HepG2 (cell line): ENCODE measurements at regions of chr1 and their contacts with region 1.

Region 1: GRCh38 chr1:105793536-105794146 is 1262.8 kb upstream of the PRMT6 start:
- DNase-seq: peak; percentile 39
- ATAC-seq: peak; percentile 73
- H3K4me3 ChIP-seq: no peak overlapping the region
- H3K27ac ChIP-seq: no peak overlapping the region
- H3K4me1 ChIP-seq: no peaks in the 10 kb centered on the region
- H3K27me3 ChIP-seq: no peaks in the 10 kb centered on the region
- CTCF ChIP-seq: peak; percentile 80
- EP300 ChIP-seq: no peak
- POLR2A ChIP-seq: no peak
- RAD21 ChIP-seq: peak; percentile 69

Region 2: DNA sequence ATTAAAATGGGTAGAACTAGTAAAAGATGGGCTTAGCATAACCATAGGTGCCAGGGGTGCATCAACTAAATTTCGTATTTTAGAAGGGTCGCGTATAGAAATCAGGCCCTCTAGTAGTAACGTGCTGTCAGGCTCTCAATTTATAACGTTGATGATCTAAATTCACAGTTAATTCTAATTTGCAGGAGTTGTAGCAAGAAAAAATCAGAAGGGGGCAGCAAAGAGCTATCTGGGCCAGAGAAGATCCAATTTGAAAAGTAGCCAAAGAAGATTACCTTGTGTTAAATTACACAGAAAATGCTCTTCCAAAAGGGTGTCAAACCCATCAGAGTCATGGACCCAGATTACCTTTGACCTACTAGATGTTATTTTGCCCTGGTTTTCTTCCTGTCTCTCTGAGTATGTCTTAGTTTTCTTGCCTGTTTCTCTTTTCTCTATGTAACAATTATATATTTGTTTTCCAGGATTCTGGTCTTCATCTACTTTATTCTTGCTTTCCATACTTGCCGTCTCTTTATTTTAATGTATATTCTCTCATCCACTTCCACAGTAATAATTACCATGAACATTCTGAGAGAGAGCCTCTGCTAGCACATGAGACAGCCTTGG is 1013.1 kb before region 1 on chr1:
- CTCF ChIA-PET with region 1: interaction called, 19 read pairs
- POLR2A ChIA-PET with region 1: no interaction called
- in situ Hi-C with region 1: loop called (anchors 5 kb)
- intact Hi-C with region 1: loop called (anchors 5 kb)
- DNase-seq: peak; percentile 19
- ATAC-seq: no peak
- H3K4me3 ChIP-seq: no peak overlapping the region
- H3K27ac ChIP-seq: no peak overlapping the region
- H3K4me1 ChIP-seq: no peaks in the 10 kb centered on the region
- H3K27me3 ChIP-seq: no peaks in the 10 kb centered on the region
- CTCF ChIP-seq: peak; percentile 73
- EP300 ChIP-seq: no peak
- POLR2A ChIP-seq: no peak
- RAD21 ChIP-seq: peak; percentile 42

Region 3: GRCh38 chr1:105398909-105399308 is 394.7 kb before region 1 on chr1:
- CTCF ChIA-PET with region 1: no interaction called
- POLR2A ChIA-PET with region 1: no interaction called
- in situ Hi-C with region 1: no loop called
- intact Hi-C with region 1: loop called (anchors 10 kb)
- DNase-seq: no peak
- ATAC-seq: no peak
- H3K4me3 ChIP-seq: no peak overlapping the region
- H3K27ac ChIP-seq: no peak overlapping the region
- H3K4me1 ChIP-seq: no peaks in the 10 kb centered on the region
- H3K27me3 ChIP-seq: no peaks in the 10 kb centered on the region
- CTCF ChIP-seq: no peak
- EP300 ChIP-seq: no peak
- POLR2A ChIP-seq: no peak
- RAD21 ChIP-seq: no peak

Region 4: GRCh38 chr1:105462308-105462707 is 331.3 kb before region 1 on chr1:
- CTCF ChIA-PET with region 1: no interaction called
- POLR2A ChIA-PET with region 1: no interaction called
- in situ Hi-C with region 1: no loop called
- intact Hi-C with region 1: loop called (anchors 5 kb)
- DNase-seq: no peak
- ATAC-seq: no peak
- H3K4me3 ChIP-seq: no peak overlapping the region
- H3K27ac ChIP-seq: no peak overlapping the region
- H3K4me1 ChIP-seq: no peaks in the 10 kb centered on the region
- H3K27me3 ChIP-seq: no peaks in the 10 kb centered on the region
- CTCF ChIP-seq: no peak
- EP300 ChIP-seq: no peak
- POLR2A ChIP-seq: no peak
- RAD21 ChIP-seq: no peak

Region 5: GRCh38 chr1:105608713-105609112 is 184.9 kb before region 1 on chr1:
- CTCF ChIA-PET with region 1: no interaction called
- POLR2A ChIA-PET with region 1: no interaction called
- in situ Hi-C with region 1: no loop called
- intact Hi-C with region 1: loop called (anchors 5 kb)
- DNase-seq: peak; percentile 4
- ATAC-seq: peak; percentile 63
- H3K4me3 ChIP-seq: no peak overlapping the region
- H3K27ac ChIP-seq: no peak overlapping the region
- H3K4me1 ChIP-seq: no peaks in the 10 kb centered on the region
- H3K27me3 ChIP-seq: no peaks in the 10 kb centered on the region
- CTCF ChIP-seq: peak; percentile 38
- EP300 ChIP-seq: no peak
- POLR2A ChIP-seq: no peak
- RAD21 ChIP-seq: no peak

Region 6: GRCh38 chr1:105632342-105633196 is 161.1 kb before region 1 on chr1:
- CTCF ChIA-PET with region 1: no interaction called
- POLR2A ChIA-PET with region 1: no interaction called
- in situ Hi-C with region 1: no loop called
- intact Hi-C with region 1: loop called (anchors 10 kb)
- DNase-seq: peak; percentile 96
- ATAC-seq: peak; percentile 97
- H3K4me3 ChIP-seq: peak overlapping the region; percentile 54 to 66 (median 63)
- H3K27ac ChIP-seq: peak overlapping the region; percentile 92
- H3K4me1 ChIP-seq: peaks cover 35% of the 10 kb centered on the region
- H3K27me3 ChIP-seq: no peaks in the 10 kb centered on the region
- CTCF ChIP-seq: no peak
- EP300 ChIP-seq: peak in 1 of 2 experiments; percentile 93; a peak in 3 of 4 replicates
- POLR2A ChIP-seq: peak; percentile 64 to 72; a peak in 3 of 4 replicates
- RAD21 ChIP-seq: no peak

Region 7: GRCh38 chr1:106173101-106173500 is 379.5 kb after region 1 on chr1:
- CTCF ChIA-PET with region 1: no interaction called
- POLR2A ChIA-PET with region 1: no interaction called
- in situ Hi-C with region 1: no loop called
- intact Hi-C with region 1: no loop called
- DNase-seq: no peak
- ATAC-seq: no peak
- H3K4me3 ChIP-seq: no peak overlapping the region
- H3K27ac ChIP-seq: no peak overlapping the region
- H3K4me1 ChIP-seq: no peaks in the 10 kb centered on the region
- H3K27me3 ChIP-seq: no peaks in the 10 kb centered on the region
- CTCF ChIP-seq: no peak
- EP300 ChIP-seq: no peak
- POLR2A ChIP-seq: no peak
- RAD21 ChIP-seq: no peak